Ascending aorta (tissue), 2 donors: ENCODE measurements at regions of chr17 and their contacts with region 1.

Region 1: GRCh38 chr17:7583253-7584109 is at the start of gene MPDU1:
- DNase-seq: peak; percentile 79 to 98
- H3K4me3 ChIP-seq: peak within 1 kb of the TSS; percentile 59 to 65
- H3K27ac ChIP-seq: peak within 1 kb of the TSS; percentile 85 to 87
- H3K4me1 ChIP-seq: peaks cover 25 to 42% of the 10 kb centered on the region in 2 donors
- H3K27me3 ChIP-seq: no peaks in the 10 kb centered on the region
- CTCF ChIP-seq: no peak
- total RNA-seq, gene MPDU1: 157 TPM

Region 2: GRCh38 chr17:7444682-7445618 is 138.5 kb before region 1 on chr17 and contains the start of gene CHRNB1:
- intact Hi-C with region 1: no loop called
- DNase-seq: peak; percentile 44 to 84
- H3K4me3 ChIP-seq: peak within 1 kb of the TSS; percentile 60 to 62
- H3K27ac ChIP-seq: peak within 1 kb of the TSS in 1 of 2 donors; percentile 34
- H3K4me1 ChIP-seq: peaks cover 15 to 27% of the 10 kb centered on the region in 2 donors
- H3K27me3 ChIP-seq: peaks cover 5% of the 10 kb centered on the region
- CTCF ChIP-seq: peak in 2 of 3 experiments; percentile 5
- total RNA-seq, gene CHRNB1: 5.0 TPM

Region 3: DNA sequence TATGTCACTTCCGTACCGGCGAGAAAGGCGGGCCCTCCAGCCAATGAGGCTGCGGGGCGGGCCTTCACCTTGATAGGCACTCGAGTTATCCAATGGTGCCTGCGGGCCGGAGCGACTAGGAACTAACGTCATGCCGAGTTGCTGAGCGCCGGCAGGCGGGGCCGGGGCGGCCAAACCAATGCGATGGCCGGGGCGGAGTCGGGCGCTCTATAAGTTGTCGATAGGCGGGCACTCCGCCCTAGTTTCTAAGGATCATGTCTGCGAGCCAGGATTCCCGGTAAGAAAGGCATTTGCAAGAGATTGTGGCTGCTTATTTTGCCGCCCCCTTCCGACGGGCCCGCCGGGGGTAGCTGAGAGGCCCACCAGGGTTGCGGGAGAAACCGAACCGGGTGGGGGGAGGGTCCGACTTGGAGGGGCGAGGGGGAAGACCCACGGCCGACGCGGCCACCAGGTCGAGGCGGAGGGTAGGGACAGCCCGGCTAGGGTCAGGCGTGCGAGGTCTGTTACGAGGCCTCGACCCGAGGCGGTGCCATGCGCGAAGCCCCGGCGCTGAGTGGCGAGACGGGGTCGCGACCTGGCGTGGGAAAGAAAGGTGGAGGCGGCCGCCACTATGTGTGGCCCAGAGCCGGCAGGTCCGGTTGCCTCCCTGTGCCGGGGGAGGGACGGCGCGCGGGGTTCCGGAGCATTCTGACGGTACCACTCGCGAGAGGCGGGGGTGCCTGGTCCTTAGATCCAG is 10.7 kb before region 1 on chr17:
- intact Hi-C with region 1: loop called (anchors 1 kb)
- DNase-seq: peak; percentile 99 to 100
- H3K4me3 ChIP-seq: peak overlapping the region; percentile 78 to 94
- H3K27ac ChIP-seq: peak overlapping the region; percentile 93 to 99
- H3K4me1 ChIP-seq: peaks cover 0 to 15% of the 10 kb centered on the region in 2 donors
- H3K27me3 ChIP-seq: no peaks in the 10 kb centered on the region
- CTCF ChIP-seq: no peak

Region 4: DNA sequence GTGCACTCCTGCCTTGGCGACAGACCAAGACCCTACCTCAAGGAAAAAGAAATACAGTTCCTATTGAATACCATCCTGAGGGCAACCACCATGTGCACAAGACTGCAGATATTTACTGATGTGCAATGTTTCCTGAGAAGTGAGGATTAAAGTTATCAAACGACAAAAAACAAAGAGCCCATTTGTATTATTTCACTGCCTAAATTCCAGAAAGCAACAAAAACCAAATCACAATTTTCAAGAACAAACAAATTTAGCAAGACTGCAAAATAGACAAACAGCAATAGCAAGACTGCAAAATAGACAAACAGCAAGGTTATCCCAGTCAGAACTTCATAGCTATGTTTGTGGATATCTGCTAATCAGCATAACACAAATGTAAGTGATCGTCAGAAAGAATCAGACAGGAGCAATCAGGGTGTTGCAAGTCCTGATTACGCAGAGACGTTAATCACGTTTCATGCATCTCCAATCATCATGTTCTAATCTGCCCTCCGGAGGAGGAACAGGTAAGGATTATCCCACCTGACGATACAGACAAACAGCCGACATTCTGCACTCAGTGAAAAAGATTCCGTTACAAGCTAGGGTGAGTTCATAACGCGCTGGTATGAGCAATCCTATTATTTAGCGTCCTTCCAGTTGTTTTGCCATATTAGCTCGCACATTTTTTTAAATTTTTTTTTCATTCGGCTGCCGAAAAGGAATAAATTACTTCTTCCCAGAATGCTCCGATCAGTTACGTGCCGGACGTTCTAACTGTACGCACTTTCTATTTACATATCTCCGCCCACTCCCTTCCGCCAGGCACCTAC is 589.8 kb after region 1 on chr17:
- intact Hi-C with region 1: loop called (anchors 10 kb)
- DNase-seq: peak in 1 of 2 donors; percentile 93
- H3K4me3 ChIP-seq: peak overlapping the region; percentile 50 to 58
- H3K27ac ChIP-seq: peak overlapping the region; percentile 78 to 89
- H3K4me1 ChIP-seq: peaks cover 0 to 17% of the 10 kb centered on the region in 2 donors
- H3K27me3 ChIP-seq: no peaks in the 10 kb centered on the region
- CTCF ChIP-seq: no peak